ENCODE measurements at regions of chr10 and their contacts with region 1.

Region 1: DNA sequence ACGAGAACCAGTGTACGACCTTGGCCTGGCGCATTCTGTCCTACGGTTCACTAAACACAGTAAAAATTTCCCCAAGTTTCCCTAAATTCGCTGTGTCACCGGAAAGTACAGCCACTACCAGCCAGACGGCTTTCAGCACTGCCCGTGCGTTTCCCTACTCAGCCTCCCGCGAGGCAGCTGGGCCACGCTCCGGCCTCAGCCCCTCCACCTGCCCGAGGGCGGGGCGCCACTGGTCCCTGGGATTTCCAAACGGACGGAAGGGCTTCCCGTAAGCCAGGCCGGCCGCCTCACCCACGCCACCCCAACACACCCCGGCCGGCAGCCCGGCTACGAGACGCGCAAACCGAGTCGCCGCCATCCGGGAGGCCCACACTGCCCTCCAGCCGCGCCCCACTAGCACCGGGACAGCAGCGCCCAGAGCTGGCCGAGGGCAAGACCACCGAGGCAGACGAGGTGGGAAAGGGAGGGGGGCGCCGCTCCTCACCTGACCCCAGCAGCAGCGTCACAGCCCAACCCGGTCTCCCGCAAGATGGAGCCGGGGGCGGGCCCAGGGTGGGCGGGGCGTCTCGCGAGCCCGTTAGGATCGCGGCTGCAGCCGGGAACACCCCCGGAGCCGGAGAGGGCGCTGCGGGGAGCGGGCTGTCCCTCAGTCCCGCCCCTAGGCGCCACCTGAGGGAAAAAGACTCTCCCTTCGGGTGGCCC is at the start of gene ANXA7:
- DNase-seq: peak; percentile 84 to 95 (median 92)
- H3K4me3 ChIP-seq: peak within 1 kb of the TSS; percentile 68 to 100 (median 95)
- H3K27ac ChIP-seq: peak within 1 kb of the TSS; percentile 52 to 98 (median 92)
- H3K27me3 ChIP-seq: no peaks in the 10 kb centered on the region
- CTCF ChIP-seq: peak in 52 of 56 donors; percentile 13 to 76 (median 56)
- total RNA-seq, gene ANXA7: 77.3 to 153 (median 116) TPM

Region 2: DNA sequence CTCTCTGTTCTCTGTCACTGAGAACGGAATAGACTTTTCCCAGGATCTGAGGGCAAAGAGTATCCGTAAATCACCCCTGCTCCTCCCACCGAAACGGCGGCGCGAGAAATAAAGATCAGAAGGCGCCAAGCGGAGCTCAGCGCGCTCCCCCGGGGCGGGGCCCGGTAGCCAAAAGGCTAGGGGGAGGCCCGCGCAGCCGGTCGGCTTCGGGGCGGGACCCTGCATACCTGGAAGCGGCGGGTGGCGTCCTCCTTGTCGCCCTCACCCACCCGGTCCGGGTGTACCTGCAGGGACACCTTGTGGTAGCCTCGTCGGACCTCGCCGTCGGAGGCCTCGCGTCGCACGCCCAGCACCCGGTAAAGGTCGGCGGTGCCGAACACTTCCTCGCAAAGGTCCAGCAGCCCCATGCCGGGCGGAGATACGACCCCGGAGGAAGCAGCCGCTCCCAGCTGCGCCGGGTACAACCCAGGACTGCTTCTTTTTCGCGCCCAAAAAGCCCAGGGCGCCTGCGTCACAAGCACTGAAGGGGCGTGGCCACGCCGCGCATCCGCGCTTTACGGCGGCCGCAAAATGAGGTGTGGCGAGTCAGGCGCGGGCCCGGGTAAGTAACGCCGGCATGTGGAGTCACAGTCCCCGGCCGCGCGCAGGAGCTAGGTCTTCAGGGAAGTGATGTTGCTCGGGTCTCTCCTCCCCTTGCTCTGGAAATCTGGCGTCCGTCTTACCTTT is 166.7 kb before region 1 on chr10 and contains the start of gene DNAJC9:
- intact Hi-C with region 1: loop called (anchors 5 to 10 kb)
- DNase-seq: peak; percentile 93 to 97 (median 96)
- H3K4me3 ChIP-seq: peak within 1 kb of the TSS; percentile 72 to 100 (median 94)
- H3K27ac ChIP-seq: peak within 1 kb of the TSS in 55 of 59 donors; percentile 1 to 89 (median 65)
- H3K27me3 ChIP-seq: no peaks in the 10 kb centered on the region
- CTCF ChIP-seq: peak in 34 of 56 donors; percentile 11 to 57 (median 30)
- total RNA-seq, gene DNAJC9: 17.3 to 49.8 (median 28.6) TPM

Region 3: DNA sequence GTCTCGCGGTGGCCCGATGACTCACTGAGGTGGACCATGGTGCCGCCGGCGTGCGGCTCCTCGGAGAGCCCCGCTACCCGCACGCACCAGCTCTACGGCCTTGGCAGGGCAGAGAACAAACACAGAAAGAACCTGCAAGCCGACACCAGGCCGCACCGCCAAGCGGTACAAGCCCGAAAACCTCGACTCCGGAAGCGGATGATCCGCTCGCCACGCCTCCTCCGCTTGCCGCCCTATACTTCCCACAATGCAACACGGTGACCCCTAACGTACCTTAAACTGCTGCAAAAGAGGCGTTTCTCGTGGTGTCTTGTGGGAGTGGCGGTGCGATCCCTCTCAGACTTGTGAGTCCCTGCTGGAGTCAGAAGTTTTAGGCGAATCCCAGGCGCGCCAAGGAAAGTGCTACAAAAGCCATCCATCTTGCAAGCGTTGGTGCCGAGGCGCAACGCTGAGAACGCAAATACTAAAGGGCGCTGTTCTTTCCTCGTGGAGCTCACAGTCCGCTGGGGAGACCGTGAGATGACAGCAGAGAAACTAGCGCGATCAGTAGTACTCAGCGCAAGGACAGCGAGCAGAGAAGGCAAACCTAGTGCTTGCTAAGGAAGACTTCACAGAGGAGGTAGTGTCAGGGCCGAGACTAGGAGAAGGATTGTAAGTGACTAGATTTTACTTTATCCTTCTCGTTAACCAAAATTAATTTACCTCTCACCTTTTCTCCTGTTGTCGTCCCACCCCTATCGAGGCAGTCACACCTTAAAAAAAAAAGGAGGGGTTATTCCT is 161.0 kb before region 1 on chr10 and contains the start of gene MRPS16:
- intact Hi-C with region 1: loop called (anchors 5 to 10 kb)
- DNase-seq: peak; percentile 83 to 98 (median 94)
- H3K4me3 ChIP-seq: peak within 1 kb of the TSS; percentile 62 to 98 (median 91)
- H3K27ac ChIP-seq: peak within 1 kb of the TSS; percentile 35 to 97 (median 91)
- H3K27me3 ChIP-seq: no peaks in the 10 kb centered on the region
- CTCF ChIP-seq: peak in 45 of 56 donors; percentile 13 to 60 (median 34)
- total RNA-seq, gene MRPS16: 44.5 to 85.9 (median 58.6) TPM

Region 4: GRCh38 chr10:73263948-73264347 is 149.7 kb before region 1 on chr10:
- intact Hi-C with region 1: loop called in 1 of 2 experiments (anchors 5 kb)
- DNase-seq: no peak
- H3K4me3 ChIP-seq: no peak overlapping the region
- H3K27ac ChIP-seq: no peak overlapping the region
- H3K27me3 ChIP-seq: no peaks in the 10 kb centered on the region
- CTCF ChIP-seq: peak; percentile 25 to 70 (median 57)

Region 5: DNA sequence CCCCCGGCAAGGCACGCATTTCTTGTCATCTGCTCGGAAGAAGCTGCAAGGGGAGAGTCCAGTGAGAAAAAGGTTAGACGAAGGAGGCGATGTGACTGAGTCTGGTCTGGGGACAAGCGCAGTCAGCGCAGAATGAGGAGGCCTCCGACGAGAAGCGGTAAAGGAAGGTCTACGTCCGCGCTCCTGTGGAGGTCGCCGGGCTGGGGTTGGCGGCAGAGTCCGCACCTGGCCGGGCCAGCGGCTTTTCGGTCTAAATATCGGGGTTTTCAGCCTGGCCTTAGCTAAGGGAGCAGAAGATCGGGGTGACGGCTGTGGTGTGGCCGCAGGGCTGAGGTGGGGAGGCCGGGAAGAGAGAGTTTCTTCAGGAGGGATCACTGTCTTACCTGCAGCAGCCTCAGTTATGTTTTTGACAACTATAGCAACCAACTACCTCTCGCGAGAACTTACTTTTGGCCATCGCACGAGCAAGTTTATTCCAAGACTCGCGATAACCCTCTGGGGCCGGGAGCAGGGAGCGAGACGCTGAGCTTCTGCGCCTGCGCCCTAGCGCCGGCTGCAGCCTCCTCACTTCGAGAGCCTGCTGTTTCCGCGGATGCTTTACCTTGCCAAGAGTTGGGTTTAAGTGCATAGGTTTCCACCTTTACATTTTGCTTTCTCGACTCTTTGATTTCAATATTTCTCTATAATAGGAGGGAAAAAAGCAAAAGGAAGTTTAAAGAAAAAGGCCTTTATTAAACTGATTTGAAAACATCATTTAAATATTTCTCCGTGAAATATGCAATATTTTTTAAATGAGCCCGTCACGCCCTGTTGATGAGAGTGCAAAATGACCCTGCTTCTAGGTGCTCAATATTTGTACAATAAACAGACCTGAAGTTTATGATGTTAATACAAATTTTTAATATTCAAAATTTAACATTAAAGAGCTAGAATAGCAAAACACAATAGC is 55.1 kb before region 1 on chr10 and contains the start of gene CFAP70:
- intact Hi-C with region 1: loop called in 1 of 2 experiments (anchors 5 kb)
- DNase-seq: peak; percentile 78 to 93 (median 90)
- H3K4me3 ChIP-seq: peak within 1 kb of the TSS; percentile 60 to 96 (median 83)
- H3K27ac ChIP-seq: peak within 1 kb of the TSS in 55 of 59 donors; percentile 11 to 91 (median 77)
- H3K27me3 ChIP-seq: no peaks in the 10 kb centered on the region
- CTCF ChIP-seq: peak in 18 of 56 donors; percentile 5 to 42 (median 23)
- total RNA-seq, gene CFAP70: 4.8 to 20.1 (median 8.8) TPM

Region 6: DNA sequence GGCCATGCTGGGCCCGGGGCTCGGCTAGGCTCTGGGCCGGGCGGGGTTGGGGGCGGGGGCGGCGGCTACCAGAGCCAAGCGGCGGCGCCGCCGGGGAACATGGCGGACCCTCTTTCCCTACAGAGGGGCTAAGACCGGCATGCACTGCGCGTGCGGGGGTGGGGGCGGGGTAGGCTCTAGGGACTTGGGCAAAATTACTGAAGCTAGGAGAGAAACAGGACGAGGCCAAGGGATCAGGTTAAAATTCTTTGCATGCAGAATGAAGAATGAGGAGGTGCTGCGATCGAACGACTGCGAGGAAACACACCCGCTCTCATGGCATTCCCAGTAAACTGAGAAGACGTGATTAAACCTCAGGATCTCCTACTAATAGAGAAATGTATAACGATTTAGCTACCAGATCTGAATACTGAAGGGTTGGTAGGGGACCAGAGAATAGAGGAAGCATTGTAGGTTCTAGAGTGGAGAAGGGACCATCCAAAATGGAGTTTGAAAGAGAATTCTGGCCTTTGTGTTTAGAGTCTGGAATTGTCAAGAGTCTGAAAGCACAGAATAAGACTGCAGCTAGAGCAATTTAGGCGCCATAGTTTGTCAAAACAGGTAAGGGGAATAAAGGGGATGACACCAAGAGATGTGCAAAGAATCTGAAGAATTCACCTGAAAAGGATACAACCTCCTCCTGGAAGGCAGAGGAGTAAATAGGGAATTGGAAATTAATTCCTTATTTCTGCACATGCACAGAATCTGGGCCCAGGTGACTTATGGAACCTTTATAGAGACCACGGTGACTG is 82.4 kb after region 1 on chr10 and contains the start of gene PPP3CB:
- intact Hi-C with region 1: loop called (anchors 1 to 2 kb)
- DNase-seq: peak; percentile 71 to 86 (median 80)
- H3K4me3 ChIP-seq: peak within 1 kb of the TSS; percentile 54 to 100 (median 92)
- H3K27ac ChIP-seq: peak within 1 kb of the TSS; percentile 78 to 98 (median 94)
- H3K27me3 ChIP-seq: no peaks in the 10 kb centered on the region
- CTCF ChIP-seq: peak in 2 of 56 donors; percentile 11 to 27
- total RNA-seq, gene PPP3CB: 64.9 to 242 (median 161) TPM

Region 7: GRCh38 chr10:73625884-73626752 is 212.4 kb after region 1 on chr10:
- intact Hi-C with region 1: loop called in 1 of 2 experiments (anchors 5 kb)
- DNase-seq: peak; percentile 64 to 96 (median 86)
- H3K4me3 ChIP-seq: peak overlapping the region; percentile 59 to 94 (median 83)
- H3K27ac ChIP-seq: peak overlapping the region; percentile 18 to 95 (median 87)
- H3K27me3 ChIP-seq: no peaks in the 10 kb centered on the region
- CTCF ChIP-seq: peak in 2 of 56 donors; percentile 12 to 18

Region 8: GRCh38 chr10:73979809-73980433 is 566.2 kb after region 1 on chr10:
- intact Hi-C with region 1: no loop called
- DNase-seq: no peak
- H3K4me3 ChIP-seq: no peak overlapping the region
- H3K27ac ChIP-seq: peak overlapping the region in 7 of 59 donors; percentile 9 to 40 (median 31)
- H3K27me3 ChIP-seq: peaks cover 0 to 3% (median 0%) of the 10 kb centered on the region in 45 donors
- CTCF ChIP-seq: no peak